Thyroid gland (tissue), 4 donors: ENCODE measurements at regions of chr6 and their contacts with region 1.

Region 1: GRCh38 chr6:63584125-63584514 is 11.8 kb downstream of the LOC128125822 start:
- DNase-seq: no peak
- H3K4me3 ChIP-seq: no peak overlapping the region
- H3K27ac ChIP-seq: no peak overlapping the region
- H3K4me1 ChIP-seq: no peaks in the 10 kb centered on the region
- H3K27me3 ChIP-seq: no peaks in the 10 kb centered on the region
- CTCF ChIP-seq: no peak
- POLR2A ChIP-seq: no peak

Region 2: GRCh38 chr6:63319939-63320338 is 264.2 kb before region 1 on chr6 and contains the start of gene LGSN:
- intact Hi-C with region 1: no loop called
- DNase-seq: no peak
- H3K4me3 ChIP-seq: no peak within 1 kb of the TSS
- H3K27ac ChIP-seq: no peak within 1 kb of the TSS
- H3K4me1 ChIP-seq: no peaks in the 10 kb centered on the region
- H3K27me3 ChIP-seq: no peaks in the 10 kb centered on the region
- CTCF ChIP-seq: no peak
- POLR2A ChIP-seq: no peak
- total RNA-seq, gene LGSN: not detected

Region 3: GRCh38 chr6:63352587-63353285 is 231.4 kb before region 1 on chr6:
- intact Hi-C with region 1: loop called (anchors 10 kb)
- DNase-seq: peak; percentile 35 to 36
- H3K4me3 ChIP-seq: no peak overlapping the region
- H3K27ac ChIP-seq: no peak overlapping the region
- H3K4me1 ChIP-seq: peaks cover 0 to 4% of the 10 kb centered on the region in 2 donors
- H3K27me3 ChIP-seq: no peaks in the 10 kb centered on the region
- CTCF ChIP-seq: peak in 5 of 6 experiments; percentile 27 to 73 (median 62)
- POLR2A ChIP-seq: no peak